ENCODE measurements at regions of chr17 and their contacts with region 1.

Region 1: GRCh38 chr17:11997147-11997846 is at the start of gene ZNF18:
- DNase-seq: peak; percentile 93 to 96 (median 94)
- H3K4me3 ChIP-seq: peak within 1 kb of the TSS; percentile 96
- H3K4me3 Mint-ChIP-seq: peak within 1 kb of the TSS; percentile 93 to 99 (median 95)
- H3K27ac ChIP-seq: peak within 1 kb of the TSS; percentile 91
- H3K27ac Mint-ChIP-seq: peak within 1 kb of the TSS; percentile 86 to 99 (median 94)
- H3K4me1 ChIP-seq: peaks cover 4% of the 10 kb centered on the region
- H3K4me1 Mint-ChIP-seq: peaks cover 24 to 42% (median 37%) of the 10 kb centered on the region in 3 donors
- H3K27me3 ChIP-seq: no peaks in the 10 kb centered on the region
- H3K27me3 Mint-ChIP-seq: peaks cover 0 to 4% of the 10 kb centered on the region in 2 donors
- total RNA-seq, gene ZNF18: 5.7 to 7.2 TPM

Region 2: GRCh38 chr17:12020642-12021622 is 23.6 kb after region 1 on chr17 and contains the start of gene MAP2K4:
- CTCF ChIA-PET with region 1: interaction called, 23 read pairs
- POLR2A ChIA-PET with region 1: interaction called, 85 read pairs
- DNase-seq: peak; percentile 90 to 95 (median 93)
- H3K4me3 ChIP-seq: peak within 1 kb of the TSS; percentile 48
- H3K4me3 Mint-ChIP-seq: peak within 1 kb of the TSS; percentile 81 to 94 (median 85)
- H3K27ac ChIP-seq: peak within 1 kb of the TSS; percentile 63
- H3K27ac Mint-ChIP-seq: peak within 1 kb of the TSS; percentile 67 to 91 (median 84)
- H3K4me1 ChIP-seq: peaks cover 31% of the 10 kb centered on the region
- H3K4me1 Mint-ChIP-seq: peaks cover 41 to 56% (median 54%) of the 10 kb centered on the region in 3 donors
- H3K27me3 ChIP-seq: no peaks in the 10 kb centered on the region
- H3K27me3 Mint-ChIP-seq: no peaks in the 10 kb centered on the region
- total RNA-seq, gene MAP2K4: 45.9 to 46.2 TPM

Measured in CD8-positive, alpha-beta memory T cell (primary cell).